MCF 10A (cell line): ENCODE measurements at regions of chr12 and their contacts with region 1.

Region 1: DNA sequence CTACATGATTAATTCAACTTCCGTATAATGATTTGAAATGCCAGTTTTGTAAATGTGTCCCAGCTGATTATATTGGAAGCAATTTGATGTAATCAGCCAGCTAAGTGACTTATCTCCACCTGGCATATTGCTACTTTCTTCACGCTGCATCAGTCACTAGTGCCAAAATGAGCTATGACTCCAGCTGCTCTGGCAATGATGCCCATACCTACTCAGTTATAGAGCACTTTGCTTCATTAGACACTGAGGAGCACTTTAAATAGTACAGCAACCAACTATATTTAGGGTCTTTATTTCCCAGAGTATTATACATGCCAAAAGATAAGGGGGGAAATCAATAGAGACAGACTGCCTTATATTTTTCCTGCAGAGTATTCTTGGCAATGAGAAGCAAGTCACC is 67.9 kb upstream of the LIN7A start:
- DNase-seq: no peak
- H3K4me3 Mint-ChIP-seq: no peak overlapping the region
- H3K27ac Mint-ChIP-seq: no peak overlapping the region
- H3K4me1 Mint-ChIP-seq: no peaks in the 10 kb centered on the region
- H3K27me3 Mint-ChIP-seq: peaks cover 26% of the 10 kb centered on the region
- CTCF ChIP-seq: no peak

Region 2: DNA sequence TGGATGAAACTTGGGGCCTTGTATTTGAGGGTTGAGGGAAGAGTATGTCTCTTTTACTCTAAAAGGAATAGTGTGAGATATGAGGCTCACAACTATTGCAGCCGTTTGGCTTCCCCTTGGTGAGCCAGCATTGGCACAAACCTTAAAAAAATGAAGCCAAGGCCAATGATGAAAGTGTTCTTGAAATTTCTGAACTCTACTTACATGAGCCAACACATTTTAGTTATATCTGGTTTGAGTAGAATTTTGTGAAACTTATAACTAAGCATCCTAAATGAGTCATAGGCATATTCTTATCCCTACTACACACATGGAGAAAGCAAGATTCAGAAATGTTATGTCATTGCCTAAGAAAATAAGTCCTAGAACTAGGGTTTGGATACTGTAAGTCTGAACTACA is 16.9 kb after region 1 on chr12:
- CTCF ChIA-PET with region 1: no interaction called
- POLR2A ChIA-PET with region 1: no interaction called
- intact Hi-C with region 1: loop called (anchors 2 kb)
- DNase-seq: no peak
- H3K4me3 Mint-ChIP-seq: no peak overlapping the region
- H3K27ac Mint-ChIP-seq: no peak overlapping the region
- H3K4me1 Mint-ChIP-seq: no peaks in the 10 kb centered on the region
- H3K27me3 Mint-ChIP-seq: peaks cover 43% of the 10 kb centered on the region
- CTCF ChIP-seq: no peak